ENCODE measurements at regions of chr17 and their contacts with region 1.

Region 1: GRCh38 chr17:77391668-77392375 is 251.1 kb downstream of the SEC14L1 start:
- DNase-seq: peak; percentile 61
- H3K4me3 Mint-ChIP-seq: peak overlapping the region; percentile 87
- H3K27ac Mint-ChIP-seq: peak overlapping the region; percentile 87
- H3K4me1 Mint-ChIP-seq: peaks cover 80% of the 10 kb centered on the region
- H3K27me3 Mint-ChIP-seq: no peaks in the 10 kb centered on the region

Region 2: DNA sequence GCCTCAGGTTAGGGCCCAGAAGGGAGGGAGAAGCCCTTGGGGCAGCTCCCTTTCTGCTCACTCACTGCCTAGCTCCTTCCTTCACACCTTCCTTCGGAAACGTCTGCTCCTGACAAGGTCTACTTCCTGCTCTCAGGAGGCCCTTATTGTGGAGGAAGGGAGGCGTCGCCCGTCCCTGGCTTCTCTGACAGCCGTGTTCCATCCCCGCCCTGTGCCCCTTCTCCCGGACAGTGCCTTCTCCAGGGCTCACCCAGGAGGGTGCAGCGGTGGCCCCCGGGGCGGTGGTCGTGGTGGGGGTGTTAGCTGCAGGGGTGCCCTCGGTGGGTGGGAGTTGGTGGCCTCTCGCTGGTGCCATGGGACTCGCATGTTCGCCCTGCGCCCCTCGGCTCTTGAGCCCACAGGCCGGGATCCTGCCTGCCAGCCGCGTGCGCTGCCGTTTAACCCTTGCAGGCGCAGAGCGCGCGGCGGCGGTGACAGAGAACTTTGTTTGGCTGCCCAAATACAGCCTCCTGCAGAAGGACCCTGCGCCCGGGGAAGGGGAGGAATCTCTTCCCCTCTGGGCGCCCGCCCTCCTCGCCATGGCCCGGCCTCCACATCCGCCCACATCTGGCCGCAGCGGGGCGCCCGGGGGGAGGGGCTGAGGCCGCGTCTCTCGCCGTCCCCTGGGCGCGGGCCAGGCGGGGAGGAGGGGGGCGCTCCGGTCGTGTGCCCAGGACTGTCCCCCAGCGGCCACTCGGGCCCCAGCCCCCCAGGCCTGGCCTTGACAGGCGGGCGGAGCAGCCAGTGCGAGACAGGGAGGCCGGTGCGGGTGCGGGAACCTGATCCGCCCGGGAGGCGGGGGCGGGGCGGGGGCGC is 19.2 kb before region 1 on chr17:
- intact Hi-C with region 1: loop called (anchors 1 kb)
- DNase-seq: peak; percentile 76
- H3K4me3 Mint-ChIP-seq: peak overlapping the region; percentile 76
- H3K27ac Mint-ChIP-seq: peak overlapping the region; percentile 68
- H3K4me1 Mint-ChIP-seq: peaks cover 57% of the 10 kb centered on the region
- H3K27me3 Mint-ChIP-seq: no peaks in the 10 kb centered on the region